ENCODE measurements at regions of chr2 and their contacts with region 1.

Region 1: GRCh38 chr2:213187833-213188532 is 36.6 kb upstream of the IKZF2 start:
- DNase-seq: peak; percentile 58 to 60
- H3K4me3 ChIP-seq: no peak overlapping the region
- H3K27ac ChIP-seq: no peak overlapping the region
- H3K4me1 ChIP-seq: 0 out of 2 replicates have a peak, but pooled peaks cover 7% of the 10 kb centered on the region
- H3K27me3 ChIP-seq: no peaks in the 10 kb centered on the region
- CTCF ChIP-seq: no peak

Region 2: GRCh38 chr2:213216461-213216860 is 28.5 kb after region 1 on chr2:
- CTCF ChIA-PET with region 1: no interaction called
- POLR2A ChIA-PET with region 1: no interaction called
- intact Hi-C with region 1: loop called (anchors 1 kb)
- DNase-seq: peak; percentile 9 to 84
- H3K4me3 ChIP-seq: peak overlapping the region; percentile 17; the same call in 1 of the 2 replicates
- H3K27ac ChIP-seq: peak overlapping the region; percentile 58
- H3K4me1 ChIP-seq: peaks cover 14% of the 10 kb centered on the region
- H3K27me3 ChIP-seq: no peaks in the 10 kb centered on the region
- CTCF ChIP-seq: no peak

Region 3: DNA sequence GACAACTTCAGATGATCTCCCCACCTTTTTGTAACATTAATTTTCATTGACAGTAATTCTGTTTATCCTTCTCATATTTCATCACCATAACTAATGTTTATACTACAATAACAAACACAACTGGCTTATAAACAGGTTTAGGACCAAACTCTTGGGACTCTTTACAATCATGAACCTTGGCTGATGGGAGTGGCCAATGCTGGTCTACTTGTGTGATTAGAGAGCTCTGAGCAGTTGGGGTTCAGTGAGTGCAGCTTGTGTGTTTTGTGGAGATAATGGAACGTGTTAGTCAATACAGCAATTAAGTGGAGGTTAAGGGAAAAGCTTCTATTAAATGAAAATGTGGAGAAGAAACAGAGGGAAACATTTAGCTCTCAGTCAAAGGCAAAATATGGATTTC is 303.4 kb after region 1 on chr2:
- CTCF ChIA-PET with region 1: no interaction called
- POLR2A ChIA-PET with region 1: no interaction called
- intact Hi-C with region 1: no loop called
- DNase-seq: no peak
- H3K4me3 ChIP-seq: no peak overlapping the region
- H3K27ac ChIP-seq: no peak overlapping the region
- H3K4me1 ChIP-seq: no peaks in the 10 kb centered on the region
- H3K27me3 ChIP-seq: no peaks in the 10 kb centered on the region
- CTCF ChIP-seq: no peak